ENCODE measurements at regions of chr2 and their contacts with region 1.

Region 1: GRCh38 chr2:30883188-30883587 is 75.9 kb upstream of the CAPN13 start:
- DNase-seq: no peak
- H3K4me3 ChIP-seq: no peak overlapping the region
- H3K27ac ChIP-seq: no peak overlapping the region; a peak in 1 of 4 replicates
- H3K4me1 ChIP-seq: peaks cover 0 to 19% of the 10 kb centered on the region in 2 experiments; a peak in 1 of 4 replicates
- H3K27me3 ChIP-seq: no peaks in the 10 kb centered on the region
- CTCF ChIP-seq: no peak
- EP300 ChIP-seq: no peak
- RAD21 ChIP-seq: no peak; the same call in 1 of the 2 replicates

Region 2: DNA sequence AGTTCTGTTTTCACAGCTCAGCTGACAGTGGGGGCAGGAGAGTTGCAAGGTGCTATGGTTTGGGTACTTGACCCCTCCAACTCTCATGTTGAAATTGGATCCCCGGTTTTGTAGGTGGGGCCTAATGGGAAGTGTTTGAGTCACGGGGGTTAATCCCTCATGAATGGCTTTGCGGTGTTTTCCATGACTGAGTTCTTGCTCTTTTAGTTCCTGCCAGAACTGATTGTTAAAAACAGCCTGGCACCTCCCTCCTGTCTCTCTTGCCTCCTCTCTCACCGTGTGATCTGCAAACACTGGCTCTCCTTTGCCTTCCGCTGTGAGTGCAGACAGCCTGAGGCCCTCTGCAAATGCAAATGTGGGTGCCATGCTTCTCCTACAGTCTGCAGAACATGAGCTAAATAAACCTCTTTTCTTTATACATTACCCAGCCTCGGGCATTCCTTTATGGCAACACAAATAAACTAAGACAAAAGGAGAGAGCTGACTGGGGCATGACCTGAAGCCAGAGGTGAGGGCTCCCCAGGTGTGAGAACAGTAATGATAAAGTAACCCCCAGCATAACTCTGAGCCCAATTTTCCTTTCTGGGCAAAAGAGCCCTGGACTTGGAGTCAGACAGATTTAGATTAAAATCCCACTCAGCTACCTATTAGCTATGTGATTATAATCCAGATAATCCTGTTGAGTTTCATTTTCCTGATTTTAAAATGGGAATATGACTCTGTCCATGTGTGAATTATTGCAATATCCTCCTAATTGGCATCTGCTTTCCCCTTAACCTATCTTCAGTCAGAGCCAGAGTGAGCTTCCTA is 11.0 kb before region 1 on chr2:
- CTCF ChIA-PET with region 1: interaction called, 11 read pairs
- POLR2A ChIA-PET with region 1: no interaction called
- DNase-seq: no peak
- H3K4me3 ChIP-seq: no peak overlapping the region
- H3K27ac ChIP-seq: peak overlapping the region in 1 of 2 experiments; percentile 99; a peak in 2 of 4 replicates
- H3K4me1 ChIP-seq: peaks cover 0 to 32% of the 10 kb centered on the region in 2 experiments; a peak in 2 of 4 replicates
- H3K27me3 ChIP-seq: no peaks in the 10 kb centered on the region
- CTCF ChIP-seq: no peak
- EP300 ChIP-seq: peak in 1 of 2 experiments; percentile 46; a peak in 1 of 4 replicates
- RAD21 ChIP-seq: no peak; the same call in 1 of the 2 replicates

Measured in SK-N-SH (cell line).